Astrocyte of the cerebellum (primary cell): ENCODE measurements at regions of chr11 and their contacts with region 1.

Region 1: DNA sequence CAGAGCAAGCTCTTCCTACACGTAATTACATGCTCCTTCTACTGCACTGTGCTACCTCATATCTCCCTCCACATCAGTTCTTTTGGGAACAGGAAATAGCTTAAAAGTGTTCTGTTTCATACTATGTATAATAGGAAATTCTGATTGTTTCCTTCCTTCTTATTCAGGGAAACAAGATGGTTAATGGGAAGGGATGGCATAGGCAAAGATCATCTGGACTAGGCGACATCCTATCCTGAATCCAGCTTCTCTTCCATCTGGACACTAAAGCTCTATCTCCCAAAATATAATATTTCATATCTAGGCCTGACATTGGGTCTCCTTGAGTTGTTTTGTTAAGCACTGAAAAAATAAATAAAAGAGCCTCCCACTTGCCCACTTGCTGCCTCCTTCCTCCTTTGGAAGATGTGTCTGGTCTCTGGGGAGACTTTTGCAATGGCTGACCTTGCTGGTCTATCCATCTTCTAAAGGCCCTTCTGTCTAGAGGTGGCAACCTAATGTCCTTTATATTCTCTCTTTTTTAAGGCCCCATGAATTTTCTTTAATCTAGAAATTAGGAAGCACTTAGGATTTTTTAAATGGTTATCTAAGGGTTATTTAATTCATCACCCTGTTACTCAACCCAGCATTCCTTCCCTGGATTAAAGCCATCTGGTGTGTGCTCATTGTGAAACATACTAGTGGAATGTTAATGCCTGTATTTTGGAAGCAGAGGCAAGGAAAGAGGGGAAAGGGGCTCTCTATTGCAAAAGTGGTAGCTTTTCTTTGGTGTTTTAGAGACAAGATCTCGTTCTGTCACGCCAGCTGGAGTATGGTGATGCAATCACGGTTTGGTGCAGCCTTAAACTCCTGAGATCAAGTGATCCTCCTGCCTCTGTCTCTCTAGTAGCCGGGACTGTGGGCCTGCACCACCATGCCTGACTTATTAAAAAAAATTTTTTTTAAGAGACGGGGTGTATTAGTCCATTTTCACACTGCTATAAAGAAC is 20.6 kb downstream of the CLMP start:
- DNase-seq: peak; percentile 95
- H3K4me3 ChIP-seq: no peak overlapping the region
- CTCF ChIP-seq: no peak

Region 2: GRCh38 chr11:123083623-123084029 is 90.9 kb before region 1 on chr11:
- in situ Hi-C with region 1: no loop called
- DNase-seq: peak; percentile 91
- H3K4me3 ChIP-seq: no peak overlapping the region
- CTCF ChIP-seq: no peak

Region 3: GRCh38 chr11:123116486-123116885 is 58.0 kb before region 1 on chr11:
- in situ Hi-C with region 1: loop called (anchors 5 kb)
- DNase-seq: no peak
- H3K4me3 ChIP-seq: no peak overlapping the region
- CTCF ChIP-seq: no peak

Region 4: DNA sequence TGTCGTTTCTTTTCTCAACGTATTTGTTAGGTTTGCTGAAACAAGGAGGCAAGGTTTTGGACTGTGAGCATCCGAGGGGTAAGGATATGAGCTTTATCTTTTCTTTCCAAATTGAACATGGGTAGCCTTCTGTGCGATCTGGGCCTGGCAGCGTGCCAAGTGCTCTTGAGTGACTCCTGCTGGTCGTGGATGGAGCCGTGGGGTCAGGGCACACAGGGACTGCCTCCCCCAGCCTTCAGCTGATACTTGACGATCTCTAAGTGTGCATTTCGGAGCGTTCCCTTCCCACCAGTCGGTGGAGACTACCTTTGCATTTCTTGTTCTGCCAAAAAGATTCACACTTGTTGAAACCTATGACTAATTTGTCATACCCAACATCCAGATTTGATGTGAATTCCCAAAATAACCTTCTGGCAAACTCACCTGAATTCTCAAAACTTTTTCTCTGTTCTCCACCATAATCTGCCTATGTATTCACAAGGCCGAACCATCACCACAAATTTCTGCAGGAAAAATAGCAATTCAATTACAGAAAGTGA is 60.7 kb after region 1 on chr11:
- in situ Hi-C with region 1: loop called (anchors 5 kb)
- DNase-seq: no peak
- H3K4me3 ChIP-seq: no peak overlapping the region
- CTCF ChIP-seq: peak; percentile 49

Region 5: DNA sequence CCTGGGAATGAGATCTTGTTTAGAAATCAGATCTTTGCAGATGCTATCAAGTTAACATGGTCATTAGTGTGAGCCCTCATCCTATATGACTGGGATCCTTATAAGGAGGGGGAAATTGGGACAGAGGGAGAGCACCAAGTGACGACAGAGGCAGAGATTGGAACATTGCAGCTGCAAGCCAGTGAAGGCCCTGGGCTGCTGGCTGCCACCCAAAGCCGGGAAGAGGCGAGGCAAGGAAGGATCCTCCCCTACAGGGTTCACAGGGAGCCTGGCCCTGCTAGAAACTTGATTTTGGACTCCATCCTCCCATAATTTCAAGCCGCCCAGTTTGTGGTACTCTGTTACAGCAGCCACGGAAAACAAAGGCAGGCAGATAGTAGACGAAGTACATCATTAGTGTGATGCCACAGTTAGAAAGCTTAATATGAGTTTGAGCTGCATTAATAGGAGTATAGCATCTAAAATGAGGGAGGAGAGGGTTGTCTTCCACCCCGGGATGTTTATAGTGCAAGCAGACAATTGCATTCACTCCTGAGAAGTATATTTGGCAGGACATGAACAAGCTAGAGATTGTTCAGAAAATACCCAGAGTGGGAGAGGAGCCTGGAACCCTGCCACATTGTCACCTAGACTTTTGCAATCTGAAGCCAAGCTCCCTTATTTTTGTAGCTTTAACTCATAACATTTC is 77.3 kb after region 1 on chr11:
- in situ Hi-C with region 1: no loop called
- DNase-seq: no peak
- H3K4me3 ChIP-seq: no peak overlapping the region
- CTCF ChIP-seq: no peak